ENCODE measurements at regions of chr11 and their contacts with region 1.

Region 1: DNA sequence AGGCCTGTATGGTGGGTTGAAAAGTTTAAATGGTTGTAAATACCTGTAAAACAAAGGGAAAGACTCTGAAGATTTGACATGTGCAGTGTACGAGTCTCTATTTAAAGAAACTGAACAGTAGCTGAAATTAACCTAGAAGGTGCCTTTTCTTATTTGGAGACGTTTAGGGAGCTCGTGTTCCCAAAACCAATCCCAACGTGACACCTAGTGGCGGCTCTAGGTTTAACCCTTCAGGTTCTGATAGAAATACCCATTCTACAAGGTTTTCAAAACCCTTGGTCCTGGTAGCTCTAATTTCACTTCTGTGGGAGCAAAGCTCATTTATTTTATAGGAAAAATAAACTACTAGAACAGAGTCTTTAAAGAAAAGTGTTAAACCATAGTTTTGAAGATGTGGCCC is 258.3 kb downstream of the LRRC4C start:
- DNase-seq: peak; percentile 75
- ATAC-seq: peak; percentile 60
- H3K4me3 Mint-ChIP-seq: no peak overlapping the region
- H3K27ac Mint-ChIP-seq: no peak overlapping the region
- H3K4me1 Mint-ChIP-seq: peaks cover 13% of the 10 kb centered on the region
- H3K27me3 Mint-ChIP-seq: no peaks in the 10 kb centered on the region
- CTCF ChIP-seq: peak; percentile 64

Region 2: DNA sequence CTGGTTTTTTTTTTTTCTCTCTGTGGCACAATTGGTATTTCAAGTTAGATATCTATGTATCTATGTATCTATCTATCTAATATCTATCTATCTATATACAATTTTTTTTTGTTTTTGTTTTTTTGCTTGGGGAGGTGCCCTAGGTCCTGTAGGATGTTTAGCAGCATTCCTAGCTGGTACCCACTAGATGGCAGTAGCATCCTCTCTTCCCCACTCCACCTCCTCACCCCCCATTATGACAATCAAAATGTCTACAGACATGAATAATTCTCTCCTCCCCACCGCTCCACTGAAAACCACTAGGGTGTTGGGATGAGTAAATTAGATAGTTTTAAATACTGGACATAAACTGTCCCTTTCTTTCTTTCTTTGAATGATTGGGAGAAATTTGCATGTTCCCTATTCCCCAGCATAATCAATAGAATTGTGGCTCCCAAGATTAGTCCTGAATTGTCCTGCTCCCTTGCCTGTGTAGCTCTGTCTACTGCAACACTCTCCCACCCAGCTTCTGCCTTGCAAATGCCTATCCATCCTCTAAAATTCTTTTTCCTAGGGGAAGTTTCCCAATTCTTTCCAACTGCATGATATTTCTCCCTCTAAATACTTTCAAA is 894.1 kb before region 1 on chr11:
- CTCF ChIA-PET with region 1: interaction called, 11 read pairs
- POLR2A ChIA-PET with region 1: no interaction called
- DNase-seq: no peak
- ATAC-seq: peak; percentile 91
- H3K4me3 Mint-ChIP-seq: no peak overlapping the region
- H3K27ac Mint-ChIP-seq: no peak overlapping the region
- H3K4me1 Mint-ChIP-seq: peaks cover 3% of the 10 kb centered on the region; the same call in 1 of the 2 replicates
- H3K27me3 Mint-ChIP-seq: no peaks in the 10 kb centered on the region
- CTCF ChIP-seq: peak; percentile 37

Region 3: DNA sequence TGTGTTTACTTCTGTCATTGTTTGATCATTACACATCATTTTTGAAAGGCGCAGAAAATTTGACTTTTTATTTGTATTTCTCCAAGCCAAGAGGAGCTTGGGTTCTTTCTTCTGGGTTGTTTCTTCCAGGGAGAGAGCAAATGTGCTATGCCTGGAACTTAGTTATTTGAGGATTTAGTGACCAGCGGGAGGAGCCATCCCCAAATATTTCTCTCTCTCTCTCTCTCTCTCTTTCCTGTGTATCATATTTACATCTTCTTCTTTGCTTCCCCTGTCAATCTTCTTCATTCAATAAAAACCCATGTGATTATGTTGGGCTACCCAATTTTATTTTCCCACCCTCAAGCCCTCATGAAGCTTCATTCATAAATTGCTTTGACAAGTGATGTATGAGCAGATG is 276.2 kb before region 1 on chr11:
- CTCF ChIA-PET with region 1: interaction called, 26 read pairs
- POLR2A ChIA-PET with region 1: no interaction called
- DNase-seq: no peak
- ATAC-seq: peak; percentile 57; the same call in 1 of the 2 replicates
- H3K4me3 Mint-ChIP-seq: no peak overlapping the region
- H3K27ac Mint-ChIP-seq: no peak overlapping the region
- H3K4me1 Mint-ChIP-seq: no peaks in the 10 kb centered on the region
- H3K27me3 Mint-ChIP-seq: no peaks in the 10 kb centered on the region
- CTCF ChIP-seq: no peak

Region 4: DNA sequence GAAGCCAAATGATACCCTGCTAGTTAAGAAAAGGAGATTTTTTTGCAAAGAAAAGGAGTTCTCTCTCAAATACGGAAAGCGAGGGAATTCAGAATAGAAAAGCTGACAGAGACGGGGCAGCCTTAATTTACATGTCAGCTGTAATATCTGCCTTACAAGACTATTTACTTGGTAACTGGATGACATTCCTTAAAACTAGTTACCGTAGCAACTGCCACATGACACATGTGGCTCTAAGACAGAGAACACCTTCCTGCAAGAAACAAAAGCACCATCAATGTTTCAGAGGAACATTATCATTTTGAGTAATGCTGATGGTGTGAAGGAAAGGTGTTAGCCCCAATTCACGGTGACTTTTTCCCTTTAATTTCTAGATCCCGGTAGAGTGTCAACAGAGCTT is 36.2 kb after region 1 on chr11:
- CTCF ChIA-PET with region 1: no interaction called
- POLR2A ChIA-PET with region 1: no interaction called
- DNase-seq: no peak
- ATAC-seq: no peak
- H3K4me3 Mint-ChIP-seq: no peak overlapping the region
- H3K27ac Mint-ChIP-seq: no peak overlapping the region
- H3K4me1 Mint-ChIP-seq: peaks cover 13% of the 10 kb centered on the region
- H3K27me3 Mint-ChIP-seq: no peaks in the 10 kb centered on the region
- CTCF ChIP-seq: no peak

Region 5: DNA sequence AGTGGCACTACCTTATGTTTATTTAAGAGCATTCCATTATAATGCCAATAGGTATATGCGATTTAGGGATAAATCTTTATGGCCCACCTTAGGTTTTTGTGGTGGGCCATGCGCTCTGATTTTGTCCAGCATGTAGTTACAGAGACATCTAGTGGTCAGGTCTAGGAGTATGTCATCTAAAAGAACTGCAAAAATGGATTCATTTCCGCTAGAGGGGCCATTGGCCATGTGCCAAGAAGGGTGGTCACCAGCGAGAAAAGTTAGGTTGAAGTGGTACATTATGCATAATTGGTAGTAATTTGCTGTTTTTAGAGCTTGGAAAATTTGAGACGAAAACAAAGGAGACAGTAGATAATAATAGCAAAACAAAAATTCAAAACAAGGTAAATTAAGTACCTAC is 230.6 kb after region 1 on chr11:
- CTCF ChIA-PET with region 1: interaction called, 13 read pairs
- POLR2A ChIA-PET with region 1: no interaction called
- DNase-seq: peak; percentile 15
- ATAC-seq: peak; percentile 84
- H3K4me3 Mint-ChIP-seq: no peak overlapping the region
- H3K27ac Mint-ChIP-seq: no peak overlapping the region
- H3K4me1 Mint-ChIP-seq: peaks cover 31% of the 10 kb centered on the region
- H3K27me3 Mint-ChIP-seq: no peaks in the 10 kb centered on the region
- CTCF ChIP-seq: peak; percentile 42

Measured in WTC11 (cell line).